ENCODE measurements at regions of chr21 and their contacts with region 1.

Region 1: GRCh38 chr21:15592271-15592860 is 137.4 kb upstream of the USP25 start:
- DNase-seq: no peak
- H3K4me3 ChIP-seq: no peak overlapping the region
- H3K27ac ChIP-seq: no peak overlapping the region
- H3K4me1 ChIP-seq: peaks cover 0 to 2% (median 0%) of the 10 kb centered on the region in 4 donors
- H3K27me3 ChIP-seq: no peaks in the 10 kb centered on the region
- CTCF ChIP-seq: peak; percentile 46 to 56 (median 50)
- EP300 ChIP-seq: no peak
- POLR2A ChIP-seq: no peak

Region 2: DNA sequence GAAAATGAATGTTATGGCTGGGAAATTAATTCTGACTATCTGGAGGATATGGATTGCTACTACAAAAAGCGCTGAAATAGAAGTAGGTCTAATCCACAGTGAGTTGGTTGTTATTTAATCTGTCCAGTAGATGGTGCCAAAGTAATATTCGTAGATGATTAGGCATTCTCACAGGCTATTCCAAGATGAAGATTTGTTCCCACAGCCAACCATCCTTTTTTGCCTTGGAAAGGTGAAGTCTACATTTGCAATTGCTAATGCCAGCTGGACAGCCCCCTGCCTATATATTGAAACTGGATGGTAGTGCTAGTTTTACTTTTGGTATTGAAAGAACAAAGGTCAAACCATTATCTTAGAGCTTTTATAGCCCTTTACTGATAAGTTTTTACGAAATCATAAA is 1332.6 kb before region 1 on chr21:
- intact Hi-C with region 1: loop called (anchors 10 kb)
- DNase-seq: no peak
- H3K4me3 ChIP-seq: no peak overlapping the region
- H3K27ac ChIP-seq: no peak overlapping the region
- H3K4me1 ChIP-seq: no peaks in the 10 kb centered on the region
- H3K27me3 ChIP-seq: no peaks in the 10 kb centered on the region
- CTCF ChIP-seq: peak; percentile 36 to 59 (median 41)
- EP300 ChIP-seq: no peak
- POLR2A ChIP-seq: no peak

Region 3: GRCh38 chr21:15729674-15730483 is 137.5 kb after region 1 on chr21 and contains the start of gene USP25:
- intact Hi-C with region 1: no loop called
- DNase-seq: peak; percentile 97
- H3K4me3 ChIP-seq: peak within 1 kb of the TSS; percentile 80 to 93 (median 87)
- H3K27ac ChIP-seq: peak within 1 kb of the TSS; percentile 94 to 97 (median 96)
- H3K4me1 ChIP-seq: peaks cover 15 to 42% (median 37%) of the 10 kb centered on the region in 4 donors
- H3K27me3 ChIP-seq: no peaks in the 10 kb centered on the region
- CTCF ChIP-seq: peak in 2 of 3 experiments; percentile 20 to 35
- EP300 ChIP-seq: no peak
- POLR2A ChIP-seq: no peak
- total RNA-seq, gene USP25: 48.2 to 75.1 (median 60.0) TPM